Psoas muscle (tissue), 8 donors: ENCODE measurements at regions of chr5 and their contacts with region 1.

Region 1: GRCh38 chr5:103315455-103315854 is 56.9 kb downstream of the MACIR start:
- DNase-seq: no peak
- ATAC-seq: no peak
- H3K4me3 ChIP-seq: no peak overlapping the region
- H3K27ac ChIP-seq: no peak overlapping the region
- H3K4me1 ChIP-seq: no peaks in the 10 kb centered on the region
- H3K27me3 ChIP-seq: no peaks in the 10 kb centered on the region
- CTCF ChIP-seq: no peak

Region 2: DNA sequence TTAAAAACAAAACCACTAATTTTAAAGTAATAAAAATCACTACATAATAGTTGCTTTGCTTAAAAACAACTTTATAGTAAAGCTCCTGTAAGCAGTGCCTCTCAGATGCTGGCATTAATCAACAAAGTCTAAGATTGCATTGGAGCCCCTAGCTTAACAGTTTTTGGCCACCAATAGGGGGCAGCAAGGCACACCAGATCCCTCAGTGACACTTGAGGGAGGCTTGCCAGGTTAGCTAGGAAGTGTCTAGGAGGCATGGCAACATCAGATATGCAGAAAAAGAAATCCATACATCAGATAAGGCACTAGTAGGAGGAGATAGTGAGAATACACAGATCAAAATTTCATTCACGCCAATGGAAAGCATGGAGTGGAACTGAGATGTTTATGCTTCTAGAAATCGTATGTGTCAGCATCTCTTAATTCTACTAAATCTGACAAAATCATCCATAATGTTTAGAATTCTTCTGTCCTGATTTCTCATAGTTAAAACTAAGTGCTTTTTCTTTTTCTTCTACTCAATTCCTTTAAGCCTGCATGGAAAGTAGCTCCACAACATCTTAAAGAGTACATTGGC is 634.0 kb before region 1 on chr5:
- intact Hi-C with region 1: no loop called
- DNase-seq: peak; percentile 44 to 75
- ATAC-seq: peak; percentile 75 to 95 (median 82)
- H3K4me3 ChIP-seq: no peak overlapping the region
- H3K27ac ChIP-seq: no peak overlapping the region
- H3K4me1 ChIP-seq: no peaks in the 10 kb centered on the region
- H3K27me3 ChIP-seq: no peaks in the 10 kb centered on the region
- CTCF ChIP-seq: peak; percentile 82

Region 3: DNA sequence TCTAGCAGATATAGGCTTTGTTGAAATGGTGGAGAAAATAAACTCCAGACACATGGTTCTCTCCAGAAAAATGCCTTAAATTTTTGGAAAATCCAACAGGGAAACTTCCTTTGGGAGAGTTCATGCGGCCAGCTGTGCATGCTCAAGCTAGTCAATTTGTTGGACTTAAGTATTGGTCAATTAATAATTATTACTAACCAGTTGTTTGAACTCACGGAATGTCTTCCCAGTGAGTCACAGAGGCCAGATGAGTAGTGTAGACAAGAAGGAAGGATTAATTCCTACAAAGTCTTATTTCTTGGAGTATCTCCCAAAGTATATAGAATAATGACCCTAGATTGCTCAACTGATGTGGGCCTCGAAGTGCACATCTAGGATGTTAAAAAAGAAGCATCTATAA is 46.8 kb after region 1 on chr5:
- intact Hi-C with region 1: loop called in 1 of 2 experiments (anchors 2 kb)
- DNase-seq: no peak
- ATAC-seq: no peak
- H3K4me3 ChIP-seq: no peak overlapping the region
- H3K27ac ChIP-seq: no peak overlapping the region
- H3K4me1 ChIP-seq: no peaks in the 10 kb centered on the region
- H3K27me3 ChIP-seq: no peaks in the 10 kb centered on the region
- CTCF ChIP-seq: no peak

Region 4: GRCh38 chr5:103424453-103425205 is 109.2 kb after region 1 on chr5:
- intact Hi-C with region 1: no loop called
- DNase-seq: no peak
- ATAC-seq: peak in 1 of 4 donors; percentile 45
- H3K4me3 ChIP-seq: no peak overlapping the region
- H3K27ac ChIP-seq: no peak overlapping the region
- H3K4me1 ChIP-seq: peaks cover 24% of the 10 kb centered on the region
- H3K27me3 ChIP-seq: no peaks in the 10 kb centered on the region
- CTCF ChIP-seq: no peak

Region 5: GRCh38 chr5:103461243-103461642 is 145.8 kb after region 1 on chr5:
- intact Hi-C with region 1: no loop called
- DNase-seq: no peak
- ATAC-seq: no peak
- H3K4me3 ChIP-seq: no peak overlapping the region
- H3K27ac ChIP-seq: no peak overlapping the region
- H3K4me1 ChIP-seq: peaks cover 7% of the 10 kb centered on the region
- H3K27me3 ChIP-seq: no peaks in the 10 kb centered on the region
- CTCF ChIP-seq: no peak